Adrenal gland (tissue), 19 donors: ENCODE measurements at regions of chr4 and their contacts with region 1.

Region 1: DNA sequence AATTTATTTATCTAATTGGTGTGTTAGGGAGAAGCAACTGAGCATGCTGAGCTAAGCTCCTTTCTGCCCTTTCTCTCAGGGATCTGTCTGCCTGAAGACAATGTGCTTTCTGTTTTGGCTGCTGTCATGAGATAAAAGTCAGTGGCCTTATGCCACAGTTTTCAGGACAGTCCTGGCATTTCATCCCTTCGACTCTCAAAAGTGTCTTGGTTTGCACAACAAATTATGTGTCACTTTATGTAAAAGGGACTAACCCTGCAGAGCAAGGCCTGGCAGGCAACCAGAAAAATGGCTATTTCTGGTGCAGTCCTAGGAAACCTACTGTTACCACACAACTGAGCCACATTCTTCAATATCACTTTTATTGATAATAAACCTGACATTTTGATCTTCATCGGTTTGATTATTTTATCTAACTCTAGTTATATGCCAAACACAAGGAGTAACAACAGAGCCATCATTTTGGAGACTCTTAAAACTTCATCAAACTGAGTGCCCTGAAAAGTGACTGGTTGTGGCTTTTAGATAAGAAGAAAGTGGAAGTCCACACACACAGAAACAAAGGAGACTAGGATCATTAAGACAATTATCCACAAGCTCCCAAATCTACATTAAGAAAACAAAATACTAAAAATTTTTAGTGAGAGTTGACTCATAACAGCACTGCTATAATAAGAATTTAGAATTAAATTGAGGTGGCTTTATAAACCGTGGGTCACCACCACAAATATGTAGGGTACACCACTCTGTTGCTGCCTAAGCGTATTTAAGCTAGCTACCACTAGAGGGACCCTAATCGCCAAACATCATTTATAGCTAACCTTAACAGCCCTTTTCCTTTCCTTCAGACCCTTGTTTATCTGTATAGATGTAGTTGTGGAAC is 95.9 kb upstream of the PTPN13 start:
- DNase-seq: peak; percentile 29 to 88 (median 72)
- H3K4me3 ChIP-seq: peak overlapping the region in 1 of 4 donors; percentile 6
- H3K27ac ChIP-seq: peak overlapping the region in 2 of 5 donors; percentile 6 to 20
- H3K4me1 ChIP-seq: peaks cover 0 to 10% of the 10 kb centered on the region in 2 donors
- H3K27me3 ChIP-seq: no peaks in the 10 kb centered on the region
- CTCF ChIP-seq: peak; percentile 60 to 84 (median 74)
- POLR2A ChIP-seq: no peak

Region 2: GRCh38 chr4:86640469-86640868 is 142.2 kb after region 1 on chr4:
- intact Hi-C with region 1: no loop called
- DNase-seq: no peak
- H3K4me3 ChIP-seq: no peak overlapping the region
- H3K27ac ChIP-seq: no peak overlapping the region
- H3K4me1 ChIP-seq: no peaks in the 10 kb centered on the region
- H3K27me3 ChIP-seq: no peaks in the 10 kb centered on the region
- CTCF ChIP-seq: no peak
- POLR2A ChIP-seq: no peak

Region 3: GRCh38 chr4:86891766-86892635 is 393.8 kb after region 1 on chr4 and contains the start of gene C4orf36:
- intact Hi-C with region 1: loop called (anchors 2 to 5 kb)
- DNase-seq: peak; percentile 54 to 79 (median 70)
- H3K4me3 ChIP-seq: peak within 1 kb of the TSS; percentile 33 to 95 (median 80)
- H3K27ac ChIP-seq: peak within 1 kb of the TSS in 3 of 5 donors; percentile 54 to 76 (median 74)
- H3K4me1 ChIP-seq: peaks cover 3 to 14% of the 10 kb centered on the region in 2 donors
- H3K27me3 ChIP-seq: no peaks in the 10 kb centered on the region
- CTCF ChIP-seq: no peak
- POLR2A ChIP-seq: no peak
- total RNA-seq, gene C4orf36: 0.28 to 2.0 (median 0.61) TPM in 7 of 9 donors, not detected in the others